HepG2 (cell line): ENCODE measurements at regions of chr15 and their contacts with region 1.

Region 1: GRCh38 chr15:53710906-53711305 is 48.6 kb downstream of the WDR72 start:
- DNase-seq: no peak
- ATAC-seq: no peak
- H3K4me3 ChIP-seq: peak overlapping the region in 1 of 3 experiments; percentile 22; a peak in 1 of 6 replicates
- H3K27ac ChIP-seq: no peak overlapping the region
- H3K4me1 ChIP-seq: peaks cover 9% of the 10 kb centered on the region
- H3K27me3 ChIP-seq: peaks cover 0 to 1% of the 10 kb centered on the region in 2 experiments; a peak in 1 of 5 replicates
- CTCF ChIP-seq: no peak
- EP300 ChIP-seq: no peak
- POLR2A ChIP-seq: no peak
- RAD21 ChIP-seq: no peak

Region 2: DNA sequence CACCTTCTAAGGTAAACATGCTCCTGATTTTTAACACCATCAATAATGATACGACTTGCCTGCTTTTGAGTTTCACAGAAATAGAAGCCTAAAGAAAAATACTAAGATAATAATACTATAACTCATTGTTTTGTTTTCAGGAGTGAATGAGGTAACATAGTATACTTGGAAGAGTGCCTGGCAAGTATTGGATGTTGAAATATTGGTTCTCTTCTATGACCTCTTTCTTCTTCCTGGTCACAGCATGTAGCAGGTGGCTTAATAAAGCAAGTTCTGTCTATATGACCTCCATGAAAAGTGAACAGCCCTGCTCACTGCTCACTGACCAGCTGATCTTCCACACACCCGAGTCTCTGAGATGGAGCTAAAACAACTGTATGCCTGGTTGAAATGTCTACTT is 608.4 kb before region 1 on chr15:
- CTCF ChIA-PET with region 1: no interaction called
- POLR2A ChIA-PET with region 1: no interaction called
- in situ Hi-C with region 1: no loop called
- intact Hi-C with region 1: loop called (anchors 5 kb)
- DNase-seq: no peak
- ATAC-seq: no peak
- H3K4me3 ChIP-seq: no peak overlapping the region
- H3K27ac ChIP-seq: no peak overlapping the region
- H3K4me1 ChIP-seq: no peaks in the 10 kb centered on the region
- H3K27me3 ChIP-seq: no peaks in the 10 kb centered on the region
- CTCF ChIP-seq: no peak
- EP300 ChIP-seq: no peak
- POLR2A ChIP-seq: no peak
- RAD21 ChIP-seq: no peak

Region 3: DNA sequence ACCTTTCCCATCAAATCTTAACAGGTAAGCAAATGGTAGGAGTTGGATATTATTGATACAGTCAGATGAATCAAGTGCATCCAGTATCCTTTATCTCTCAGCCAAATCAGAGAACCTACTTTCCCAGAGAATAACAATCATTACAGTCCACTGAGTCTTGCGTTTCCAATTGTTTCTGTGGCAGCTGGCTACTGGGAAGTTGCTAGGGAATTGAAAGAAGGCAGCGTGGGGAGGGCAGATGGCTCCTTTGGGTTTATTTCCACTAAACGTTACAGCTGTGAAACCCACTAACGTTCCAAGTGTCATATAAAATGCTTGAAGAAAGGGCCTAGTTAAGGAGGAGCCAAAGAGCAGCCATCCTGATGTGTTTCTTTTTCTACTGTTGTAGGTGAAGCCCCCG is 29.9 kb before region 1 on chr15:
- CTCF ChIA-PET with region 1: no interaction called
- POLR2A ChIA-PET with region 1: no interaction called
- in situ Hi-C with region 1: no loop called
- intact Hi-C with region 1: loop called (anchors 1 kb)
- DNase-seq: no peak
- ATAC-seq: no peak
- H3K4me3 ChIP-seq: no peak overlapping the region
- H3K27ac ChIP-seq: no peak overlapping the region
- H3K4me1 ChIP-seq: no peaks in the 10 kb centered on the region
- H3K27me3 ChIP-seq: no peaks in the 10 kb centered on the region
- CTCF ChIP-seq: no peak
- EP300 ChIP-seq: no peak
- POLR2A ChIP-seq: no peak
- RAD21 ChIP-seq: no peak